Activated CD4-positive, alpha-beta memory T cell treated with anti-CD3 and anti-CD28 coated beads, Interleukin-2, amount 10 ng/mL, durations not matched to agents 7 days and 5 days (primary cell): ENCODE measurements at regions of chr11 and their contacts with region 1.

Region 1: GRCh38 chr11:130882138-130882551 is 34.1 kb downstream of the SNX19 start:
- DNase-seq: no peak
- H3K4me3 Mint-ChIP-seq: no peak overlapping the region
- H3K27ac Mint-ChIP-seq: no peak overlapping the region
- H3K4me1 Mint-ChIP-seq: peaks cover 9% of the 10 kb centered on the region
- H3K27me3 Mint-ChIP-seq: no peaks in the 10 kb centered on the region

Region 2: DNA sequence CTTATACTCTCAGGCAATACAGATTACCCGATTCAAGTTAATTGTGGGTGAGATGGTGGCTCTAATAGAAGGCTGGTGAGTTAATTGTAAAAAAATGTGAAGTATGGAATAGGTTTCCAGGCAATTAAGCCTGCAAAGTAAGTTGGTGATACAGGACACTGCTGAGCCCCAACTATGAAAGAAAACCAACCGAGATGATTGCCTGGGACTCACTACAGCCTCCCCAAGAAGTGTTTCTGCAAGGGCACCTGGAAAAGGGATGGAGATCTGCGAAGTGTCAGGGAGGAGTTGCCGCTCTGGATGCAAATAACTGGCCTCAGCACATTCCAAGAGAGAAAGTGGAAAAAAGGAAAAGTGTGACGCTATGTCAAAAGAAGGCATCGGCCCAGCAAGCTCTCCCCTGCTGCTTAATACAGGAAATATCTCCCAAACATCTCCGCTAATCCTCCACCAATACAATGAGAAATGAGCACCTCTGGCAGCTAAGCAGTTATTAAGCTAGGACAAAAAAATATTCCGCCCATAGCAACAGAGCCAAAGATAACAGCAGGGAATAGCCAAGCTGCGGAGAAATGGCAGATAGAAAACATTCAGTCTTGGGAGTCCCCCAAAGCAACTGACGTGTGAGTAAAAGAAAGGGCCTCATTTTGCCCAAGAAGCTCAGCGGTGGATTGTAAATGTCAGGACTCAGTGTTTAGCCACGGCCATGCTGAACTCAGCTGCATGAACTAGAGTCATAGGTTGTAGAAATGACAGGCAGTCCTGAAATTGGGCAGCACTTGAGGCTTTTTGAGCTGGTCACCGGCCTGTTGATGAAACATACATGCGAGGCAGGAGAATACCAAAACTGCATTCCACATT is 99.6 kb before region 1 on chr11:
- CTCF ChIA-PET with region 1: no interaction called
- POLR2A ChIA-PET with region 1: no interaction called
- DNase-seq: no peak
- H3K4me3 Mint-ChIP-seq: no peak overlapping the region
- H3K27ac Mint-ChIP-seq: no peak overlapping the region
- H3K4me1 Mint-ChIP-seq: no peaks in the 10 kb centered on the region
- H3K27me3 Mint-ChIP-seq: peaks cover 11% of the 10 kb centered on the region

Region 3: GRCh38 chr11:130894322-130895025 is 12.3 kb after region 1 on chr11:
- CTCF ChIA-PET with region 1: interaction called, 10 read pairs
- POLR2A ChIA-PET with region 1: no interaction called
- DNase-seq: peak; percentile 72
- H3K4me3 Mint-ChIP-seq: no peak overlapping the region
- H3K27ac Mint-ChIP-seq: no peak overlapping the region
- H3K4me1 Mint-ChIP-seq: no peaks in the 10 kb centered on the region
- H3K27me3 Mint-ChIP-seq: no peaks in the 10 kb centered on the region